ENCODE measurements at regions of chr17 and their contacts with region 1.

Region 1: GRCh38 chr17:64411999-64412771 is 21.5 kb upstream of the PECAM1 start:
- DNase-seq: peak in 3 of 9 donors; percentile 16 to 34 (median 24)
- ATAC-seq: peak; percentile 73
- H3K4me3 ChIP-seq: peak overlapping the region; percentile 30
- H3K4me3 Mint-ChIP-seq: peak overlapping the region in 9 of 10 donors; percentile 53 to 86 (median 80)
- H3K27ac ChIP-seq: no peak overlapping the region
- H3K27ac Mint-ChIP-seq: peak overlapping the region in 8 of 9 donors; percentile 15 to 89 (median 76)
- H3K4me1 ChIP-seq: peaks cover 0 to 13% of the 10 kb centered on the region in 2 donors
- H3K4me1 Mint-ChIP-seq: peaks cover 9 to 38% (median 15%) of the 10 kb centered on the region in 7 donors
- H3K27me3 ChIP-seq: no peaks in the 10 kb centered on the region
- H3K27me3 Mint-ChIP-seq: peaks cover 0 to 4% (median 0%) of the 10 kb centered on the region in 5 donors

Region 2: DNA sequence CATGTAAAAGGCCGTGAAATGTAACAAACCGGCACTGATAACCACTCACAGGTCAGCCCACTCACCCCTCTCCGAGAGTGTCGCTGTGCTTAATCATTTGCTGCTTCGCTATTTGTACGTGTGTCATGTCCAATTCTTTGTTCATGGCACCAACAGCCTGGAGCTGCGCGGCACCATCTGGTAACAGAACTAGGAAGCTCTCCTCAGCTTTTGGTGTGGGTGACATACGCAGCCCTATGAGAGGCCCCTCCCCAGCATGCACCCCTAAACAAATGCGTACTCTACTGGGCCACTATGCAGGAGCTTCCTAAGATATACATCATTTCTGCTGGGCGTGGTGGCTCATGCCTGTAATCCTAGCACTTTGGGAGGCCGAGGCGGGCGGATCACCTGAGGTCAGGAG is 19.2 kb before region 1 on chr17:
- CTCF ChIA-PET with region 1: interaction called, 6 read pairs
- POLR2A ChIA-PET with region 1: interaction called, 18 read pairs
- intact Hi-C with region 1: no loop called
- DNase-seq: peak in 7 of 9 donors; percentile 29 to 63 (median 48)
- ATAC-seq: peak; percentile 67
- H3K4me3 ChIP-seq: peak overlapping the region; percentile 42
- H3K4me3 Mint-ChIP-seq: peak overlapping the region; percentile 43 to 94 (median 83)
- H3K27ac ChIP-seq: peak overlapping the region; percentile 80
- H3K27ac Mint-ChIP-seq: peak overlapping the region; percentile 56 to 98 (median 94)
- H3K4me1 ChIP-seq: peaks cover 14 to 31% of the 10 kb centered on the region in 2 donors
- H3K4me1 Mint-ChIP-seq: peaks cover 33 to 83% (median 61%) of the 10 kb centered on the region in 7 donors
- H3K27me3 ChIP-seq: no peaks in the 10 kb centered on the region
- H3K27me3 Mint-ChIP-seq: peaks cover 0 to 2% (median 0%) of the 10 kb centered on the region in 5 donors

Region 3: GRCh38 chr17:64399071-64399766 is 13.0 kb before region 1 on chr17:
- CTCF ChIA-PET with region 1: interaction called, 3 read pairs
- POLR2A ChIA-PET with region 1: interaction called, 18 read pairs
- intact Hi-C with region 1: no loop called
- DNase-seq: no peak
- ATAC-seq: no peak
- H3K4me3 ChIP-seq: no peak overlapping the region
- H3K4me3 Mint-ChIP-seq: peak overlapping the region in 5 of 10 donors; percentile 34 to 97 (median 50)
- H3K27ac ChIP-seq: no peak overlapping the region
- H3K27ac Mint-ChIP-seq: peak overlapping the region in 4 of 9 donors; percentile 8 to 91 (median 66)
- H3K4me1 ChIP-seq: peaks cover 8 to 20% of the 10 kb centered on the region in 2 donors
- H3K4me1 Mint-ChIP-seq: peaks cover 13 to 61% (median 43%) of the 10 kb centered on the region in 7 donors
- H3K27me3 ChIP-seq: no peaks in the 10 kb centered on the region
- H3K27me3 Mint-ChIP-seq: no peaks in the 10 kb centered on the region

Region 4: DNA sequence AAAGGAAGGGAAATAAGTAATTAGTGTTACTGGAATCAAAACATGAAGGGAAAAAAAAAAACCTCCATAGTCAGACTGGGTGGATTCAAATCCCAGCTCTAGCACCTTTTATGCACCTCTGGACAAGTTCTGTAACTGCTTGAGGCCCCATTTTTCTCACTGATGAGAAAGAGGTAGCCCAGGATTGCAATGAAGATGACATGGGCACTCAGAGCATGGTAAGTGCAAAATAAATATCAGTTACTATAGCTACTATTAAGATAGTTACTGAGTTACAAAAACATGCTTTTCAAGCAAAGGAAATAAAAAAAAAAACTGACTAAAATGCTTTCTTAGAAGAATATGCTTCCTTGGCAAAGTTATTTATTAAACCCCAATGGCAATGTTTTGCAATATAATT is 153.4 kb after region 1 on chr17:
- CTCF ChIA-PET with region 1: no interaction called
- POLR2A ChIA-PET with region 1: no interaction called
- intact Hi-C with region 1: no loop called
- DNase-seq: no peak
- ATAC-seq: no peak
- H3K4me3 ChIP-seq: no peak overlapping the region
- H3K4me3 Mint-ChIP-seq: no peak overlapping the region
- H3K27ac ChIP-seq: no peak overlapping the region
- H3K27ac Mint-ChIP-seq: peak overlapping the region in 1 of 9 donors; percentile 66
- H3K4me1 ChIP-seq: no peaks in the 10 kb centered on the region
- H3K4me1 Mint-ChIP-seq: peaks cover 0 to 4% (median 0%) of the 10 kb centered on the region in 7 donors
- H3K27me3 ChIP-seq: no peaks in the 10 kb centered on the region
- H3K27me3 Mint-ChIP-seq: no peaks in the 10 kb centered on the region